KBM-7 (cell line): ENCODE measurements at regions of chr6 and their contacts with region 1.

Region 1: GRCh38 chr6:45714741-45715507 is 300.7 kb downstream of the CLIC5 start:
- DNase-seq: peak; percentile 83

Region 2: GRCh38 chr6:44630125-44631028 is 1084.5 kb before region 1 on chr6:
- in situ Hi-C with region 1: loop called (anchors 25 kb)
- DNase-seq: peak; percentile 41

Region 3: GRCh38 chr6:45445749-45446549 is 269.0 kb before region 1 on chr6:
- in situ Hi-C with region 1: loop called (anchors 25 kb)
- DNase-seq: peak; percentile 99